KBM-7 (cell line): ENCODE measurements at regions of chr7 and their contacts with region 1.

Region 1: GRCh38 chr7:45917658-45918057 is 3.4 kb downstream of the IGFBP3 start:
- DNase-seq: peak; percentile 70

Region 2: GRCh38 chr7:45278763-45279398 is 638.8 kb before region 1 on chr7:
- in situ Hi-C with region 1: no loop called
- DNase-seq: no peak

Region 3: GRCh38 chr7:46321556-46322205 is 404.0 kb after region 1 on chr7:
- in situ Hi-C with region 1: loop called (anchors 25 kb)
- DNase-seq: no peak

Region 4: DNA sequence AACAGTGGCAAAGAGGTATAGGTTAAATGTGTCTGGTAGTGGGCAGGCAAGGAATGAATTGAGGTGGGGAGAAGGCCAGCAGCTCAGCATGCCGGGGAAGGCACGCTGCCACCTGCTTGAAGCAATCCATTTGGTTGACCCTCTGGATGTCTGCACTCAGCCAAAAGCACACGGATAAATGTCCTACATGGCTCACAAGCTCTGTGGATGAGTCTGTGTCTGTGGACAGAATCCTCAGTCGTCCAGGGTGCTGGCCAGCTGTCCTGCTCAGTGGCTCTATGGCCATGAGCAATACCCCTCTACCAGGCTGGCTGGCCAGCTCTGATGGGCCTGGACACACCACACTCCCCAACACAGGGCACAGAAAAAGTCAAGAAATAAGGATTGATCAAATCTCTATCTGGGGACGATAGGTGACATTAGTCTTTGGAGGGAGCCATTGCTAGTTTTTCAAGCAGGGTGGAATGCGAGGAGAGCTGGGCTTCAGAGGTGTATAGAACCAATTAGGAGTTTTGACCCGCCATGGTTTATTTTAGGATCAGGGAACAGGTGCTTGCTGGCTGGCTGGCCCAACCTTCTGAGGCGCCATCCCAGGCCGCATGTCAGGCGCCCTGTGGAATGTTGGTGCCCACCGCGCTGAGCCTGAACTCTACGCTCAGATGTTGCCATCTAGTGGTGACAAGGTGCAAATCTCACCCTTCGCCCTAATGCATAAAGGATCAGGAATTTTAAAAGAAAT is 1170.8 kb after region 1 on chr7:
- in situ Hi-C with region 1: loop called (anchors 25 kb)
- DNase-seq: peak; percentile 44